BJ (cell line): ENCODE measurements at regions of chr19 and their contacts with region 1.

Region 1: GRCh38 chr19:46392243-46392801 is 21.0 kb downstream of the CCDC8 start:
- DNase-seq: peak; percentile 18
- H3K4me3 ChIP-seq: no peak overlapping the region
- H3K27me3 ChIP-seq: no peaks in the 10 kb centered on the region
- CTCF ChIP-seq: no peak

Region 2: GRCh38 chr19:46283771-46284170 is 108.6 kb before region 1 on chr19:
- CTCF ChIA-PET with region 1: interaction called, 76 read pairs
- POLR2A ChIA-PET with region 1: no interaction called
- DNase-seq: no peak
- H3K4me3 ChIP-seq: no peak overlapping the region
- H3K27me3 ChIP-seq: no peaks in the 10 kb centered on the region
- CTCF ChIP-seq: no peak

Region 3: DNA sequence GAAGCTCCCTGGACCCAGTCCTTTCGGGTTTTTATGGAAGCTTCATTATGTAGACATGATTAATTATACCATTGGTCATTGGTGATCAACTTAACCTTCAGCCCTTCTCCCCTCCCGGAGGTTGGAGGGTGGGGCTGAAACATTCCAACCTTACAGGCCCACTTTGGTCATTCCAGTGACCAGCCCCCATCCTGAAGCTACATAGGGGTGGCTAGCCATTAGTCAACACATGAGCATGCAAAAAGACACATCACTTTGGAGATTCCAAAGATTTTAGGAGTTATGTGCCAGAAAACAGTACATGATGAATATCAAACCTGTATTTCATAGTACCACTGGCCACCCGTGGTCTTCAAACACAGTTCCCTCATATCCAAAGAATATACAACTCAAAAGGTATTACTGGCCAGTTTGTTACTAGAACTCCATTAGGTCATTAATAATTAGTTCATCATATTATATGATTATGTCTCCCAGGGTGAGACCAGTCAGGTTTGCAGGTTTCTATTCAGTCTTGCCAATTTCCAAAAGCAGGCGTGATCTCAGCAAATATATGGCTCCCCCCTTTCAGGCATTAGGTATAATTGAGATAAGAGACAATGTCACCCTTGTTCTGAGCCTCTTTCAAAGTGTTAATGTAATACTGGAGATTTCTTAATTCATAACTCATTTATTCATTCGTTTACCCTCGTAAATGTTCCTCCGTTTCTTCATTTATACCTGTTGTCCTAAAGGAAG is 34.3 kb before region 1 on chr19:
- CTCF ChIA-PET with region 1: interaction called, 7 read pairs
- POLR2A ChIA-PET with region 1: interaction called, 20 read pairs
- DNase-seq: no peak
- H3K4me3 ChIP-seq: no peak overlapping the region
- H3K27me3 ChIP-seq: no peaks in the 10 kb centered on the region
- CTCF ChIP-seq: no peak

Region 4: DNA sequence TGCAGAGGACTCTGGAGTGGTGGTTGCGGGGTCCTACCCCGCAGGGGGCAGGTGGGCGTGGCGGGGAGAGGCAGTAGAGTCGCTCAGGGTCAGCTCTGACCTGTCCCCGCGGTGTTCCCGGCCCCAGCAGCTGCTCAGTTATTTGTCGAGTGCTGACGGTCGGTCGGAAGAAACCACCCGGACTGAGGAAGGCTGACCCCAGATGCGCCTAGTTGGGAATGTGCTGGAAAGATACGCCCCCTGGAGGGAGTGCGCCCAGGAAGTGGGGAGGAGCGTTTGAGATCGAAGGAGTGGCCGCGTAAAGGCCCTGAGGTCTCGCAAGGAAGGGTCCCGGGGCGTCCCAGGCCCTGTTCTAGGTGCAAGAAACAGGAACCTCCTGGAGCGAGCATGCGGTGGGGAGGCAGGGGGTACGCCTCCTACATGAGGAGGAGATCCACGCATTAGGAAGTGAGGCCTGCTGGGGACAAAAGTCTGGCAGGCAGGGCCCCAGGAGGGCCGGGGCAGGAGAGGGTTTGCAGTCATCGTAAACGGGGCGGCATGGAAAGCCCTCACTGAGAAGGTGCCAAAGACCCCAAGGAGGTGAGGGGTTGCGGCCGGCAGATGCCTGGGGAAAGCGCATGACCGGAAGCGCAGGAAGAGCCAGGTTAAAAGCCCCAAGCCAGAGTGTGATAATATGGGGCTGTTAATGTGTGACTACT is 11.9 kb after region 1 on chr19:
- CTCF ChIA-PET with region 1: interaction called, 20 read pairs
- POLR2A ChIA-PET with region 1: no interaction called
- DNase-seq: no peak
- H3K4me3 ChIP-seq: peak overlapping the region; percentile 28
- H3K27me3 ChIP-seq: no peaks in the 10 kb centered on the region; the same call in 1 of the 2 replicates
- CTCF ChIP-seq: peak; percentile 51; the same call in 1 of the 2 replicates

Region 5: DNA sequence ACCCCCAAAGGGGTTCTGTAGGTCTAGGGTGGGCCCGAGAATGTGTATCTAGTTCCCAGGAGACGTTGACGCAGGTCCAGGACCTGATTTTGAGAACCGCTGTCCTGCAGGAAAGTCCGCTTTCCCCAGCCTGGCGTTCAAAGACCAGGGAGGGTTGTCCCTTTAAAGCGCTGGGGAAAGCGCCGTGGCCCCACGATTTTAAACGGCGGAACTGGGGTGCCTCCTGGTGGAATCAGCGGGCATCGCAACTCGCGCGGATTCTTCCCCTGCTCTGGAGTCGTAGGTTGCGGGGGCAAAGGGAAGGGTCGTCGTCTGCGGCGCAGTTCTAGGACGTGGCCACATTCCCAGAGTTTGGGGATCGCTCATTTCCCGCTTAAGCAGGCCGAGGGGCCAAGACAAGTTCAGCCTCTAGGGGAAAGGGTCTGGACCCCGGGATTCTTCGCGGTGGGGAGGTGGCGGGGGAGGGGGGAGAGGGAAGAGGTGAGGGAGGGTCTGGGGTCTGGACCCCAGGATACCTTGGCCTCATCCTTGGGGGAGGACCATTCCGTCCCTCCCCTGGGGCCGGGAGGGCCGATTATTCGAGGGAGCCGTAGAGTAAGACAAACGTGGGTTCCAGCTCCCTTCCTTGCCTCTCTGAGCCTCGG is 95.6 kb after region 1 on chr19:
- CTCF ChIA-PET with region 1: interaction called, 90 read pairs
- POLR2A ChIA-PET with region 1: interaction called, 7 read pairs
- DNase-seq: no peak
- H3K4me3 ChIP-seq: peak overlapping the region; percentile 20
- H3K27me3 ChIP-seq: peaks cover 9% of the 10 kb centered on the region; the same call in 1 of the 2 replicates
- CTCF ChIP-seq: peak; percentile 95